Common myeloid progenitor, CD34-positive (primary cell): ENCODE measurements at regions of chr14 and their contacts with region 1.

Region 1: GRCh38 chr14:74860906-74861733 is 14.8 kb downstream of the PROX2 start:
- DNase-seq: peak; percentile 81 to 90 (median 82)
- H3K4me3 ChIP-seq: no peak overlapping the region
- H3K27ac ChIP-seq: no peak overlapping the region
- H3K4me1 ChIP-seq: peaks cover 6 to 24% (median 17%) of the 10 kb centered on the region in 4 experiments
- H3K27me3 ChIP-seq: no peaks in the 10 kb centered on the region

Region 2: DNA sequence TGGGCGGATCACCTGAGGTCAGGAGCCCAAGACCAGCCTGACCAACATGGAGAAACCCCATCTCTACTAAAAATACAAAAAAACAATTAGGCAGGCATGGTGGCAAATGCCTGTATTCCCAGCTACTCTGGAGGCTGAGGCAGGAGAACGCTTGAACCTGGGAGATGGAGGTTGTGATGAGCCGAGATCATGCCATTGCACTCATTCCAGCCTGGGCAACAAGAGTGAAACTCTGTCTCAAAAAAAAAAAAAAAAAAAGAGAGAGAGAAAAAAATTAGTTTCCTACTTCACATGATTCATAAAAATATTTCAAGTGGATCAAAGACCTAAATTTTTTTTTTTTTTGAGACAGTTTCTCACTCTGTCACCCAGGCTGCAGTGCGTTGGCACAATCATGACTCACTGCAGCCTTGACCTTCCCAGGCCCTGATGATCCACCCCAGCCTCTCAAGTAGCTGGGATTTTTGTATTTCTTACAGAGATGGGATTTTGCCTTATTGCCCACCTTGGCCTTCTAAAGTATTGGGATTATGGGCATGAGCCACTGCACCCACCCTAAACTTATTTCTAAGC is 123.3 kb before region 1 on chr14:
- CTCF ChIA-PET with region 1: no interaction called
- POLR2A ChIA-PET with region 1: no interaction called
- DNase-seq: no peak
- H3K4me3 ChIP-seq: no peak overlapping the region
- H3K27ac ChIP-seq: no peak overlapping the region
- H3K4me1 ChIP-seq: no peaks in the 10 kb centered on the region
- H3K27me3 ChIP-seq: no peaks in the 10 kb centered on the region

Region 3: GRCh38 chr14:74841230-74842207 is 19.6 kb before region 1 on chr14:
- CTCF ChIA-PET with region 1: interaction called, 21 read pairs
- POLR2A ChIA-PET with region 1: no interaction called
- DNase-seq: peak in 2 of 3 donors; percentile 79 to 86
- H3K4me3 ChIP-seq: no peak overlapping the region
- H3K27ac ChIP-seq: no peak overlapping the region
- H3K4me1 ChIP-seq: peaks cover 8 to 33% (median 19%) of the 10 kb centered on the region in 4 experiments
- H3K27me3 ChIP-seq: no peaks in the 10 kb centered on the region

Region 4: DNA sequence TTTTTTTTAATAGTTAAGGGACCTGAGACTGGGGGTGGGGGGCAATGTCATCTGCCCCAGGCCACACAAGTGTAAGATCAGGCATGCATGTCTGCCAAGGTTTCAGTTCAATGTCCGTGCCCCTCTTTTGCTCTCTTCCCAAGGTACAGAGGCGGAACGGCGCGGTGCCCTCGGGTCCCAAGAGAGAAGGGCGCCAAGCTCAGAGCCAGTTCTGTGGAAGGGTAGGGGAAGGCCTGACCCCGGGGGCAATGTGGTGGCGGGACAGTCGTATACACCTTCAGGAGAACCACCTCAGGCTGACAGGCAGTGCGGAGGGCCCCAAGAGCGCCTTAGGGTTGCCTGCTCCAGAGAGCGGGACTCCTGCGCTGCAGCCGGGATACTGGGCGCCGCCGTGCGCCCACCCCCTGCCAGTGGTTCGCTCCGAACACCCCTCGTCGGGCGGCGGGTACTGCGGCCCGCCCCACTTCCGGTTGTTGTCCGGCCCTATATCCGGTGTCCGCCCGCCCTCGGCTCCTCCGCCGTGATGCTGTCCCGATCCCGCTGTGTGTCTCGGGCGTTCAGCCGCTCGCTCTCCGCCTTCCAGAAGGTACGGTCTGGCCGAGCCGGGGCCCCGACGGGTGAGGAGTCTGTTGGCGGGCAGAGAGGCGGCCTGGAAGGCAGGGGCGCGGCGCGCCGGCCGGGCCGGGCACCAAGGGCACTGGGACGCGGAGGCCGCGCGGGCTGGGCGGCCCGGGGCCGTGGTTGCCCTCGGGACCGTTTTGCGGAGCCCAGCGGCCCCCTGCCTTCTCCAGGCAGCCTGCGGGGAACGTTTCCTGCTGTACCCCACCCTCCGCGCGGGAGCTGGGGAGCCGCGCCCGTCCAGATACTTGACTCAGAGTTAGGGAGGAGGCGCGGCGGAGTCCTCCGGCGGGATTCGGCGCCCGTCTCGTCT is 20.6 kb after region 1 on chr14 and contains the start of gene DLST:
- CTCF ChIA-PET with region 1: interaction called, 434 read pairs
- POLR2A ChIA-PET with region 1: no interaction called
- DNase-seq: peak; percentile 83 to 89 (median 88)
- H3K4me3 ChIP-seq: peak within 1 kb of the TSS; percentile 83 to 99 (median 96)
- H3K27ac ChIP-seq: peak within 1 kb of the TSS; percentile 86 to 88
- H3K4me1 ChIP-seq: peaks cover 14 to 41% (median 33%) of the 10 kb centered on the region in 4 experiments
- H3K27me3 ChIP-seq: no peaks in the 10 kb centered on the region

Region 5: GRCh38 chr14:74893614-74894091 is 32.5 kb after region 1 on chr14:
- CTCF ChIA-PET with region 1: interaction called, 281 read pairs
- POLR2A ChIA-PET with region 1: interaction called, 4 read pairs
- DNase-seq: peak in 2 of 3 donors; percentile 62 to 64
- H3K4me3 ChIP-seq: no peak overlapping the region
- H3K27ac ChIP-seq: peak overlapping the region in 1 of 2 experiments; percentile 16
- H3K4me1 ChIP-seq: peaks cover 0 to 29% (median 26%) of the 10 kb centered on the region in 4 experiments
- H3K27me3 ChIP-seq: no peaks in the 10 kb centered on the region

Region 6: GRCh38 chr14:74905375-74906142 is 44.4 kb after region 1 on chr14:
- CTCF ChIA-PET with region 1: interaction called, 498 read pairs
- POLR2A ChIA-PET with region 1: interaction called, 8 read pairs
- DNase-seq: peak; percentile 66 to 78 (median 74)
- H3K4me3 ChIP-seq: no peak overlapping the region
- H3K27ac ChIP-seq: no peak overlapping the region
- H3K4me1 ChIP-seq: peaks cover 0 to 23% (median 17%) of the 10 kb centered on the region in 4 experiments
- H3K27me3 ChIP-seq: no peaks in the 10 kb centered on the region

Region 7: DNA sequence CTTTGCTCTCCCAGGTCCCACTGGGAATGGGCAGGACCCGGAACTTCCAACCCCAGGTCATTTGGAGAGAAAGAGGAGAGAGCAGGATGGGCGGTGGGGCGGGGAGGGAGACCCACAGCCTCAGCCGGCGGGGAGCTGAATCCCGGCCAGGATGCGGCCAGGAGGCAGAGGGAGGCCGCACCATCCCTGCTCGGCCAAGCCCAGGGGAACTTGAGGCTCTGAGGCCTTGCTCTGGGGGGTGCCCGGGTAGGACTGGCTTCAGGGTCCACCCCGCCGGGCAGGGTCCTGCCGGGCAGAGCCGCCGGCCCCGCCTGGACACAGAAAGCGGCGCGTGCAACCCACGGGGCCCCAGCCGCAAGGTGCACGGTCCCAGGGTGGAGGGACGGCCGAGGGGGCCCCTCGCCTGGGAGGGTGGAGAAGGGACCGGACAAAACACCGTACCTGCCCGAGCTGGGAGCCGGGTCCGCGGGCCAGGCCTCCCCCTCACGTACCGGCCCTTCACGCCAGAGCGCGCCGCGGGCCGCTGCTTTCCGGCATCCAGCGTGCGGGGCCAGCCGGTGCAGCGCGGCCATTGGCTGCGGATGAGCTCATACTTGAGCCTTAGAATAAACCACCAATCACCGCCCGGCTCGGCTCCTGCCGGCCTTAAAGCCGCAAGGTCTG is 61.8 kb after region 1 on chr14 and contains the start of gene RPS6KL1:
- CTCF ChIA-PET with region 1: interaction called, 14 read pairs
- POLR2A ChIA-PET with region 1: no interaction called
- DNase-seq: peak; percentile 81 to 89 (median 87)
- H3K4me3 ChIP-seq: peak within 1 kb of the TSS; percentile 4 to 74 (median 66)
- H3K27ac ChIP-seq: no peak within 1 kb of the TSS
- H3K4me1 ChIP-seq: peaks cover 0 to 6% (median 3%) of the 10 kb centered on the region in 4 experiments
- H3K27me3 ChIP-seq: no peaks in the 10 kb centered on the region

Region 8: DNA sequence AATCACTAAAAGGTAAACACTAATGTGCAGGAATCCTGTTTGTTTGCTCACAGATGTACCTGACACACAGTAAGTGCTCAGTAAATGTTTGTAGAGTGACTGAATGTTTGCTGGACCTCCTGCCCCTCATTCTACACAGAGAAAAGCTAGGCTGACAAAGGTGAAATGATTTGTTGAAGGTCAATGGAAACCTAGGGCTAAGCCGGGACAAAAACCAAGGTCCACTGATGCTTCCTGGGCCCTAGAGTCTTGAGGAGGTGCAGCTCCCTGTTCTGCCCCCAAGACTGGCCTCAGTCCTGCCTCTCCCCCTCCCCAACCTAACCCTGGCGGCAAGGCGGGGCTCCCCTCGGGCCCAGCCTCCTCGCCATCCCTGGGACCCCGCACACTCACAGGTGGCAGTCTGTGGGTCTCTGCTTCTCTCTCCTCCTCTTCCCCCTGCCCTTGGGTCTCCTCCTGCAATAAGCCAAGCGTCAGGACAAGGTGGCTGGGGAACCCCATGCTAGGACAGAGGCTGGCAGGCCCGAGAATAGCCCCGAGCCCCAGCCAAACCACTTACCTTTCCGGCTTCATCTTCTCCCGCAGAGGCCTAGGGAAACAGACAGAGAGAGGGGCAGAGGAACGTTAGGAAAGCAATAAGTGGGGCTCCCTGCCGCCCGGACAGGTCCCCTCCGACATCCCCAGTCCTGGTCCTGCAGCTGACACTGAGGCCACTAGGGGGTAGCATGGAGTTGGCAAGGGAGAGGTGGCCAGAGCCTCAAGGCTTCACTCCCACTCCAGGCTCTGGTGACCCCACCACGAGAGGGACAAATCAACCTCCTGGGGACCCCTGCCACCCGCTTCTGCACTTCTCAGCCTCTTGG is 84.9 kb after region 1 on chr14:
- CTCF ChIA-PET with region 1: interaction called, 23 read pairs
- POLR2A ChIA-PET with region 1: no interaction called
- DNase-seq: peak; percentile 60 to 71 (median 63)
- H3K4me3 ChIP-seq: no peak overlapping the region
- H3K27ac ChIP-seq: no peak overlapping the region
- H3K4me1 ChIP-seq: peaks cover 2 to 51% (median 27%) of the 10 kb centered on the region in 4 experiments
- H3K27me3 ChIP-seq: no peaks in the 10 kb centered on the region